ENCODE measurements at regions of chr7 and their contacts with region 1.

Region 1: GRCh38 chr7:13850185-13850752 is 139.2 kb downstream of the ETV1 start:
- DNase-seq: peak; percentile 48 to 79
- ATAC-seq: peak; percentile 94 to 99 (median 96)
- H3K4me3 ChIP-seq: no peak overlapping the region
- H3K4me3 Mint-ChIP-seq: peak overlapping the region; percentile 56
- H3K27ac ChIP-seq: peak overlapping the region; percentile 59
- H3K27ac Mint-ChIP-seq: peak overlapping the region; percentile 79 to 88
- H3K4me1 ChIP-seq: peaks cover 9% of the 10 kb centered on the region
- H3K4me1 Mint-ChIP-seq: peaks cover 19 to 22% of the 10 kb centered on the region in 2 donors
- H3K27me3 ChIP-seq: no peaks in the 10 kb centered on the region
- H3K27me3 Mint-ChIP-seq: peaks cover 0 to 8% of the 10 kb centered on the region in 2 donors
- CTCF ChIP-seq: no peak

Region 2: DNA sequence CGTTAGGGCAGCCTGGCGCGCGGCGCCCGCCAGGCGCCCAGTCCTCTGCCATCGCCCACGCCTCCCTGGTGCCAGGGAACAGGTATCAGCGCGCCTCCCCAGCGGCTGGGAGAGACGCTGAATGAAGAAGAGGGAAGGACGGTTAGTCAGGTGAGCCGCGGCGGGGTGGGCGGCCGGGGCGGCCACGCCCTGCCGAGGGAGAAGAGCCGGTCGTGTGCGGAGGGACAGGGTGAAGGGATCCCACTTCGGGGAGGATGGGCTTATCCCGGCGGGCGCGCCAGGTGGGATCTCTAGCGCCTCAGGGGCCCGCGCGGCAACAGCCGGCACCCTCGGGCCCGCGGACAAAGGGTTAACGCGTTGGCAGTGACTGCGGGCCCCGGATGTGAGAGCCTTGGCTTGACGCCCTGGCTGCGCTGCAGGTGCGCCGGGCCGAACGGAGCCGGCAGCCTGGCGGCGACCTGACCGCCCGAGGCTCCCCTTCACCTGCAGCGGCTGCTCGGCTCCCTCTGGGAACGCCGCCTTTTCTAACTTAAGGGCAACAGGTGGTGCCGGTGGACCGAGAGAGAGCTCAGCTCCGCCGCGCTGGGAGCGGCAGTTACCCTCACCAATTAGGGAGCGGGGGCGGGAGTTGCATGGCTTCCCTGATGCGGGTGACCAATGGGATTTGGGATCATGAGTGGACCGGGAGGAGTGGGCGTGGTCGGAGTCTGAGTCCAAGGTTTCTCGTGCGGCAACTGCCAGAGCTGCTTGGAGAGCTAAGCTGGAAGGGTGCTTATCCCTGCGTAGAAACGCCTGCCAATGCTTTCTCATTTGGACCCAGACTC is 1163.2 kb before region 1 on chr7 and contains the start of gene ARL4A:
- intact Hi-C with region 1: loop called (anchors 5 kb)
- DNase-seq: peak; percentile 75 to 93
- ATAC-seq: peak; percentile 34 to 58 (median 43)
- H3K4me3 ChIP-seq: peak within 1 kb of the TSS; percentile 84
- H3K4me3 Mint-ChIP-seq: peak within 1 kb of the TSS; percentile 90
- H3K27ac ChIP-seq: peak within 1 kb of the TSS; percentile 97
- H3K27ac Mint-ChIP-seq: peak within 1 kb of the TSS; percentile 96 to 99
- H3K4me1 ChIP-seq: peaks cover 16% of the 10 kb centered on the region
- H3K4me1 Mint-ChIP-seq: peaks cover 17 to 28% of the 10 kb centered on the region in 2 donors
- H3K27me3 ChIP-seq: no peaks in the 10 kb centered on the region
- H3K27me3 Mint-ChIP-seq: no peaks in the 10 kb centered on the region
- CTCF ChIP-seq: peak; percentile 60
- total RNA-seq, gene ARL4A: 54.7 to 81.4 (median 55.5) TPM

Region 3: GRCh38 chr7:13641714-13642113 is 208.6 kb before region 1 on chr7:
- intact Hi-C with region 1: no loop called
- DNase-seq: no peak
- ATAC-seq: no peak
- H3K4me3 ChIP-seq: no peak overlapping the region
- H3K4me3 Mint-ChIP-seq: no peak overlapping the region
- H3K27ac ChIP-seq: no peak overlapping the region
- H3K27ac Mint-ChIP-seq: no peak overlapping the region
- H3K4me1 ChIP-seq: no peaks in the 10 kb centered on the region
- H3K4me1 Mint-ChIP-seq: no peaks in the 10 kb centered on the region
- H3K27me3 ChIP-seq: no peaks in the 10 kb centered on the region
- H3K27me3 Mint-ChIP-seq: no peaks in the 10 kb centered on the region
- CTCF ChIP-seq: no peak

Region 4: DNA sequence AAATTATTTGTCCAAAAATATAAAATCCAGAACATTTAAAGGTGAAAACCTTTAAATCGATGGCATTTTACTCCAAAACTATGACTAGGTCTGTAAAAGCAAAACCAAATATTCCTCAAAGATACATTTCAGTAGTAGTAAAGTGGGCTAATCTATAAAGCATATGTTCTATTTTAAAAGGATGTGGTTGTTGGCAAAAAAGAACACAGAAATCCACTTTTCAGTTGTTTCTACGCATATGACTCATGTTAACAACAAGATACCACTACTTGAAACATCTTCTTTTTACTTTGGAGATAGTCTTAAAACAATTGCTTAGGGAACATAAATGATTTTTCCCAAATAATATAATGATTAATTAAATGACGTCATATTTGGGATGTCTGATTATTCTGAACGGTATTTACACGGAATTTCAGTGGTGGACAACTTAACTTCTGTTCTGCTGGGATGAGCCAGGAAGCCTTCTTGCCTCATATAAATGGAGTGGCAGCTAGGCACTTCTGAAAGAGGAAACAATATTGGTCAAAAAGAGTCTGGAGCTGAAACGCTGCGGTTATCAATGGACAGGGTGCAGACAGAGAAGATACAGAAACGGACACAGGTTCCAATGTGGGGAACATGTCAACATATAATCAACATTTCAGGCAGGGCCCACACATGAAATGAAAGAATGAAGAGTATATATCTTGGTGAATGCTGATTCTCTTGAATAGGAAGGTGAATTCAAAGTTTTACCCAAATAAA is 60.7 kb after region 1 on chr7:
- intact Hi-C with region 1: loop called (anchors 2 kb)
- DNase-seq: peak in 1 of 2 donors; percentile 9
- ATAC-seq: peak in 2 of 3 donors; percentile 41 to 44
- H3K4me3 ChIP-seq: no peak overlapping the region
- H3K4me3 Mint-ChIP-seq: peak overlapping the region; percentile 72
- H3K27ac ChIP-seq: no peak overlapping the region
- H3K27ac Mint-ChIP-seq: peak overlapping the region; percentile 7 to 17
- H3K4me1 ChIP-seq: peaks cover 13% of the 10 kb centered on the region
- H3K4me1 Mint-ChIP-seq: peaks cover 36 to 39% of the 10 kb centered on the region in 2 donors
- H3K27me3 ChIP-seq: no peaks in the 10 kb centered on the region
- H3K27me3 Mint-ChIP-seq: no peaks in the 10 kb centered on the region
- CTCF ChIP-seq: no peak

Region 5: DNA sequence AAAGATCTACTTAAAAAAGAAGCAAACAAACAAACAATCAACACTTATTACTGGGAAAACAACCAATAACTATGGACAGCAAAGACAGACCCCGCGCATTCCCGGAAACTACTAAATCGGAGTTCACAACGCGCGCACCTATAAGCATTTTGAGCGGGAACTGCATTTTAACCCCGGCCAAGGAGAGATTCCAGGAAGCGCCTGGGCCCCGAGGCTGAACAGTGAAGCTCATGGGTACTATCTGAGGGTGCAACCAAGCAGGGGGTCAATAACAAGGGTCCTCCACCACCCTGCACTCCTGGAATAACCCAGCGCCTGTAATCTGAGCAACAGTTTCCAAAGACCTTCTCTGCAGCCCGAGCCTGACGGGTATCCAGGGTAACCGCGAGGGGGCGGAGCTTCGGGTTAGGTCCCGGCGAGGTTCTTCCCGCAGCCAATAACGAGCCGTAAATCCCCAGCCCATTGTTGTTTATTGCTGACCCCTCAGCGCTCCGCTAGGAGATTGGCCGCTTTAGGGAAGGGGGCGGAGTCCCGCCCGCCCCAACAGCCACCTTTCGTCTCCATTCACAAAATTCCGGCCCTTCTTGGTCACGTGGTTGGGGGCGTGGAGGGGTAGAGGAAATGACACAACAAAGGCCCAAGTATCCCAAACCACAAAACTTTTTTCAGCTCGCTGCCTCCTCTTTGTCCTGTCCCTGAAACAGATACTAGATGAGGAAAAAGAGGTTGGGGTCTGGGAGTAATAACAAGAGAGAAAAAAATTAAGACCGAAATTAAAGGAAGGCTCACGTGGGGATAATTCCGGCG is 140.9 kb after region 1 on chr7:
- intact Hi-C with region 1: loop called (anchors 10 kb)
- DNase-seq: peak; percentile 41 to 71
- ATAC-seq: peak; percentile 65 to 78 (median 68)
- H3K4me3 ChIP-seq: peak overlapping the region; percentile 40
- H3K4me3 Mint-ChIP-seq: no peak overlapping the region
- H3K27ac ChIP-seq: no peak overlapping the region
- H3K27ac Mint-ChIP-seq: no peak overlapping the region
- H3K4me1 ChIP-seq: peaks cover 31% of the 10 kb centered on the region
- H3K4me1 Mint-ChIP-seq: no peaks in the 10 kb centered on the region
- H3K27me3 ChIP-seq: peaks cover 31% of the 10 kb centered on the region
- H3K27me3 Mint-ChIP-seq: peaks cover 6 to 7% of the 10 kb centered on the region in 2 donors
- CTCF ChIP-seq: no peak

Measured in natural killer cell (primary cell).